ENCODE measurements at regions of chr9 and their contacts with region 1.

Region 1: DNA sequence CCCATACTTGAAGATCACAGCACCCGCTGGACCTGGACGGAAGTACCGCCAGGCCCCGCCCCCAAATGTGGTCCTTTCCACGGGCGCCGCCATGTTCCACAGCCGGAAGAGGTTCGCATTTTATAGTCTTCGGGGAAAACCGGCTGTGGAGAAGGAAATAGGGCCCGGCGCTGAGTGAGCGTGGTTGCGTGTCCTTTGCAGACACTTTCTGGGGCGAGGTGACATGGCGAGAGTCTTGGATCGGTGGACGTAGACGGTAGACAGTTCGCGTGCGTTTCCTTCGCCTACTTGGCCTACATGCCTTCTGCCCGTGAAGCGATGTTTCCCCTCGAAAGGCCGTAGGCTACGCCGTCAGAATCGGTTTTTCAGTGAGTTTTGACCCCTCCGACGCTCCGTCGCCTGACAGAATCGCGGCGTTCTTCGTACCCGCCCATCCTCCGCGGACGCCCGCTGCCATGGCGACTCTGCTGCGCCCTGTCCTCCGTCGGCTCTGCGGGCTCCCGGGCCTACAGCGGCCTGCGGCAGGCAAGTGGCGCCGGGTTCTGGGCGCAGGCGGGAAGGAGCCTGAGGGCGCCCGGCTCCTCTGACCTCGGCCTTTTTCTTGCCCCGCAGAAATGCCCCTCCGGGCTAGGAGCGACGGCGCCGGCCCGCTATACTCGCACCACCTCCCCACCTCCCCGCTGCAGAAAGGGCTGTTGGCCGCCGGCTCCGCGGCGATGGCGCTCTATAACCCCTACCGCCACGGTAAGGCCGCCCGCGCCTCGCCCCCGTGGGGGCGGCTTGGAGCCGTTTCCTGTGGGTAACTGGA is at the starts of genes COQ4 and TRUB2:
- DNase-seq: peak; percentile 80 to 95 (median 94)
- ATAC-seq: peak; percentile 95
- H3K4me3 ChIP-seq: peak within 1 kb of the TSS; percentile 98
- H3K4me3 Mint-ChIP-seq: peak within 1 kb of the TSS; percentile 82 to 99 (median 96)
- H3K27ac ChIP-seq: peak within 1 kb of the TSS; percentile 85
- H3K27ac Mint-ChIP-seq: peak within 1 kb of the TSS; percentile 95 to 99 (median 98)
- H3K4me1 ChIP-seq: peaks cover 10 to 13% of the 10 kb centered on the region in 2 donors
- H3K4me1 Mint-ChIP-seq: peaks cover 4 to 45% (median 29%) of the 10 kb centered on the region in 7 donors
- H3K27me3 ChIP-seq: no peaks in the 10 kb centered on the region
- H3K27me3 Mint-ChIP-seq: peaks cover 0 to 2% (median 0%) of the 10 kb centered on the region in 5 donors
- total RNA-seq, gene COQ4: 32.9 to 47.2 (median 42.4) TPM
- total RNA-seq, gene TRUB2: 11.5 to 27.2 (median 21.6) TPM

Region 2: GRCh38 chr9:127869310-127870152 is 453.1 kb before region 1 on chr9:
- CTCF ChIA-PET with region 1: no interaction called
- POLR2A ChIA-PET with region 1: no interaction called
- intact Hi-C with region 1: no loop called
- DNase-seq: peak; percentile 44 to 91 (median 62)
- ATAC-seq: peak; percentile 85
- H3K4me3 ChIP-seq: no peak overlapping the region
- H3K4me3 Mint-ChIP-seq: no peak overlapping the region
- H3K27ac ChIP-seq: no peak overlapping the region
- H3K27ac Mint-ChIP-seq: peak overlapping the region in 1 of 9 donors; percentile 32
- H3K4me1 ChIP-seq: peaks cover 12 to 13% of the 10 kb centered on the region in 2 donors
- H3K4me1 Mint-ChIP-seq: peaks cover 12 to 19% (median 16%) of the 10 kb centered on the region in 7 donors
- H3K27me3 ChIP-seq: no peaks in the 10 kb centered on the region
- H3K27me3 Mint-ChIP-seq: no peaks in the 10 kb centered on the region

Region 3: GRCh38 chr9:128159784-128160602 is 162.6 kb before region 1 on chr9 and contains the start of gene BBLN:
- CTCF ChIA-PET with region 1: no interaction called
- POLR2A ChIA-PET with region 1: no interaction called
- intact Hi-C with region 1: loop called in 1 of 2 experiments (anchors 1 kb)
- DNase-seq: peak; percentile 78 to 94 (median 87)
- ATAC-seq: peak; percentile 94
- H3K4me3 ChIP-seq: peak within 1 kb of the TSS; percentile 97
- H3K4me3 Mint-ChIP-seq: peak within 1 kb of the TSS; percentile 79 to 90 (median 82)
- H3K27ac ChIP-seq: peak within 1 kb of the TSS; percentile 78
- H3K27ac Mint-ChIP-seq: peak within 1 kb of the TSS; percentile 84 to 95 (median 93)
- H3K4me1 ChIP-seq: peaks cover 11 to 12% of the 10 kb centered on the region in 2 donors
- H3K4me1 Mint-ChIP-seq: peaks cover 0 to 28% (median 21%) of the 10 kb centered on the region in 7 donors
- H3K27me3 ChIP-seq: no peaks in the 10 kb centered on the region
- H3K27me3 Mint-ChIP-seq: no peaks in the 10 kb centered on the region
- total RNA-seq, gene BBLN: 42.7 to 87.8 (median 48.0) TPM

Region 4: GRCh38 chr9:128218518-128219389 is 103.9 kb before region 1 on chr9:
- CTCF ChIA-PET with region 1: no interaction called
- POLR2A ChIA-PET with region 1: no interaction called
- intact Hi-C with region 1: loop called in 1 of 2 experiments (anchors 1 kb)
- DNase-seq: peak; percentile 70 to 93 (median 89)
- ATAC-seq: peak; percentile 98
- H3K4me3 ChIP-seq: peak overlapping the region; percentile 62
- H3K4me3 Mint-ChIP-seq: peak overlapping the region; percentile 80 to 93 (median 83)
- H3K27ac ChIP-seq: peak overlapping the region; percentile 47
- H3K27ac Mint-ChIP-seq: peak overlapping the region; percentile 18 to 93 (median 65)
- H3K4me1 ChIP-seq: peaks cover 5 to 7% of the 10 kb centered on the region in 2 donors
- H3K4me1 Mint-ChIP-seq: peaks cover 9 to 13% (median 12%) of the 10 kb centered on the region in 7 donors
- H3K27me3 ChIP-seq: no peaks in the 10 kb centered on the region
- H3K27me3 Mint-ChIP-seq: peaks cover 0 to 8% (median 0%) of the 10 kb centered on the region in 5 donors

Region 5: GRCh38 chr9:128275996-128276573 is 46.5 kb before region 1 on chr9 and contains the starts of genes GOLGA2 and SWI5:
- CTCF ChIA-PET with region 1: no interaction called
- POLR2A ChIA-PET with region 1: interaction called, 4 read pairs
- intact Hi-C with region 1: loop called (anchors 1 kb)
- DNase-seq: peak; percentile 98 to 100 (median 100)
- ATAC-seq: peak; percentile 98
- H3K4me3 ChIP-seq: peak within 1 kb of the TSS; percentile 95
- H3K4me3 Mint-ChIP-seq: peak within 1 kb of the TSS; percentile 94 to 98 (median 96)
- H3K27ac ChIP-seq: peak within 1 kb of the TSS; percentile 90
- H3K27ac Mint-ChIP-seq: peak within 1 kb of the TSS; percentile 94 to 98 (median 97)
- H3K4me1 ChIP-seq: peaks cover 16 to 21% of the 10 kb centered on the region in 2 donors
- H3K4me1 Mint-ChIP-seq: peaks cover 24 to 51% (median 46%) of the 10 kb centered on the region in 7 donors
- H3K27me3 ChIP-seq: no peaks in the 10 kb centered on the region
- H3K27me3 Mint-ChIP-seq: peaks cover 0 to 7% (median 0%) of the 10 kb centered on the region in 5 donors
- total RNA-seq, gene GOLGA2: 56.5 to 76.6 (median 70.6) TPM
- total RNA-seq, gene SWI5: 8.7 to 17.4 (median 9.8) TPM

Region 6: DNA sequence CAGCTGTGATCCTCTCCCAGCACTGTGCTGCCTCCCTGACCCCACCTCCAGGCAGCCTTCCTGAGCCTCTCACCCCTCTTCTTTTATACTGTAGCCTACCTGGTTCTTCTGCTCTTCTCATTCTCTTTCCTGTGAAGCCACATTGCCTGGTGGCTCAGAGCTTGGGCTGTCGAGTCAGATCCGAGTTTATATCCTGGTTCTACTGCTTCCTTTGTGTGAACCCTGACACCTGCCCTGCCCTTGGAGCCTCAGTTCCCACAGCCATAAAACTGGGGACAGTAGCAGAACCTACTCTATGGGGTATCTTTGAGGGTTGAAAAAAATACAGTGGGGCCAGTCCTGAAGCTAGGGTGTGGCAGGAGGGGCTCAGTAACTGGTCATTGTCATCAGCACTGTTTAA is 26.5 kb after region 1 on chr9:
- CTCF ChIA-PET with region 1: no interaction called
- POLR2A ChIA-PET with region 1: no interaction called
- intact Hi-C with region 1: no loop called
- DNase-seq: no peak
- ATAC-seq: no peak
- H3K4me3 ChIP-seq: no peak overlapping the region
- H3K4me3 Mint-ChIP-seq: no peak overlapping the region
- H3K27ac ChIP-seq: no peak overlapping the region
- H3K27ac Mint-ChIP-seq: no peak overlapping the region
- H3K4me1 ChIP-seq: no peaks in the 10 kb centered on the region
- H3K4me1 Mint-ChIP-seq: peaks cover 0 to 3% (median 0%) of the 10 kb centered on the region in 7 donors
- H3K27me3 ChIP-seq: no peaks in the 10 kb centered on the region
- H3K27me3 Mint-ChIP-seq: no peaks in the 10 kb centered on the region

Region 7: GRCh38 chr9:128361986-128362646 is 39.5 kb after region 1 on chr9:
- CTCF ChIA-PET with region 1: no interaction called
- POLR2A ChIA-PET with region 1: no interaction called
- intact Hi-C with region 1: loop called in 1 of 2 experiments (anchors 2 kb)
- DNase-seq: peak; percentile 48 to 69 (median 64)
- ATAC-seq: peak; percentile 94
- H3K4me3 ChIP-seq: peak overlapping the region; percentile 61
- H3K4me3 Mint-ChIP-seq: peak overlapping the region; percentile 68 to 92 (median 87)
- H3K27ac ChIP-seq: peak overlapping the region; percentile 48
- H3K27ac Mint-ChIP-seq: peak overlapping the region in 6 of 9 donors; percentile 57 to 81 (median 74)
- H3K4me1 ChIP-seq: peaks cover 5 to 9% of the 10 kb centered on the region in 2 donors
- H3K4me1 Mint-ChIP-seq: peaks cover 0 to 22% (median 6%) of the 10 kb centered on the region in 7 donors
- H3K27me3 ChIP-seq: no peaks in the 10 kb centered on the region
- H3K27me3 Mint-ChIP-seq: no peaks in the 10 kb centered on the region

Region 8: GRCh38 chr9:128470560-128470959 is 148.0 kb after region 1 on chr9:
- CTCF ChIA-PET with region 1: no interaction called
- POLR2A ChIA-PET with region 1: no interaction called
- intact Hi-C with region 1: no loop called
- DNase-seq: peak in 4 of 9 donors; percentile 18 to 36 (median 29)
- ATAC-seq: peak; percentile 44
- H3K4me3 ChIP-seq: no peak overlapping the region
- H3K4me3 Mint-ChIP-seq: peak overlapping the region in 3 of 10 donors; percentile 24 to 60 (median 42)
- H3K27ac ChIP-seq: no peak overlapping the region
- H3K27ac Mint-ChIP-seq: peak overlapping the region in 3 of 9 donors; percentile 53 to 62 (median 61)
- H3K4me1 ChIP-seq: peaks cover 0 to 4% of the 10 kb centered on the region in 2 donors
- H3K4me1 Mint-ChIP-seq: peaks cover 0 to 11% (median 4%) of the 10 kb centered on the region in 7 donors
- H3K27me3 ChIP-seq: no peaks in the 10 kb centered on the region
- H3K27me3 Mint-ChIP-seq: no peaks in the 10 kb centered on the region

Region 9: GRCh38 chr9:128771745-128772519 is 449.3 kb after region 1 on chr9 and contains the start of gene ZER1:
- CTCF ChIA-PET with region 1: no interaction called
- POLR2A ChIA-PET with region 1: no interaction called
- intact Hi-C with region 1: loop called in 1 of 2 experiments (anchors 1 kb)
- DNase-seq: peak; percentile 92 to 98 (median 95)
- ATAC-seq: peak; percentile 97
- H3K4me3 ChIP-seq: peak within 1 kb of the TSS; percentile 97
- H3K4me3 Mint-ChIP-seq: peak within 1 kb of the TSS; percentile 95 to 99 (median 98)
- H3K27ac ChIP-seq: peak within 1 kb of the TSS; percentile 93
- H3K27ac Mint-ChIP-seq: peak within 1 kb of the TSS; percentile 93 to 100 (median 100)
- H3K4me1 ChIP-seq: peaks cover 7 to 12% of the 10 kb centered on the region in 2 donors
- H3K4me1 Mint-ChIP-seq: peaks cover 21 to 40% (median 39%) of the 10 kb centered on the region in 7 donors
- H3K27me3 ChIP-seq: no peaks in the 10 kb centered on the region
- H3K27me3 Mint-ChIP-seq: no peaks in the 10 kb centered on the region
- total RNA-seq, gene ZER1: 22.7 to 51.2 (median 34.7) TPM

Region 10: DNA sequence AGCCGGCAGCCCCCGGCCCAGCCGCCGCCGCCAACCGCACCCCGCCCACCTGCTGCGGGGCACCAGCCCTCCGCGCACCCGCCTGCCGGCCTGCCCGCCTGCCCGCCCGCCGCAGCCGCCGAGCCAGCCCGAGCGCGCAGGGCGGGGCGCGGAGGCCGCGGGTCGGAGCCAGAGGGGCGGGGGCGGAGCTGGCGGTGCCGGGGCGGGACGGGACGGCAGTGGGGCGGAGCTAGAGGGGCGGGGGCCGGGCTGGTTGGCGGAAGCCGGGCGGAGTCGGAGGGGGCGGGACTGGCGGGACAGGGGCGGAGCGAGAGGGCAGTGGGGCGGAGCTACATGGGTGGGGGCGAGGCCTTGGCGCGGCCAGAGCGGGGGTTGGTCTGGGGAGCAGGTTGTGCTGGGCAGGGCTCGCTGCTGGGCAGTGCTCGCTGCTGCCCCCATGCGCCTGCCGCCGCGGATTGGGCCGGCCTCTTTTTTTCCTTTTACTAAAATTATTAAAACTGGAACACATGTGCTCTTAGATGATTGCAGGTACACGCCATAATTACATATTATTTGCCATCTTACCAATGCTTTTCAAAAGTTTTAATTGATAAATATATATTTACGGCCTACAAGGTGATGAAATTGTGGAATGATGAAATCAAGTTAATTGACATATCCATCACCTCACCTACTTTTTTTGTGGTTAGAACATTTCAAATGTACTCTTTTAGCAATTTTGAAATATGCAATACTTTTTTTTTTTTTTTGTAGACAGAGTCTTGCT is 705.8 kb after region 1 on chr9 and contains the start of gene SH3GLB2:
- CTCF ChIA-PET with region 1: no interaction called
- POLR2A ChIA-PET with region 1: no interaction called
- intact Hi-C with region 1: loop called in 1 of 2 experiments (anchors 2 kb)
- DNase-seq: peak in 8 of 9 donors; percentile 81 to 97 (median 88)
- ATAC-seq: peak; percentile 94
- H3K4me3 ChIP-seq: peak within 1 kb of the TSS; percentile 76
- H3K4me3 Mint-ChIP-seq: peak within 1 kb of the TSS; percentile 81 to 92 (median 83)
- H3K27ac ChIP-seq: peak within 1 kb of the TSS; percentile 72
- H3K27ac Mint-ChIP-seq: peak within 1 kb of the TSS; percentile 62 to 90 (median 78)
- H3K4me1 ChIP-seq: peaks cover 13 to 18% of the 10 kb centered on the region in 2 donors
- H3K4me1 Mint-ChIP-seq: peaks cover 13 to 37% (median 25%) of the 10 kb centered on the region in 7 donors
- H3K27me3 ChIP-seq: no peaks in the 10 kb centered on the region
- H3K27me3 Mint-ChIP-seq: no peaks in the 10 kb centered on the region
- total RNA-seq, gene SH3GLB2: 76.3 to 106 (median 86.2) TPM